MCF 10A (cell line): ENCODE measurements at regions of chr2 and their contacts with region 1.

Region 1: DNA sequence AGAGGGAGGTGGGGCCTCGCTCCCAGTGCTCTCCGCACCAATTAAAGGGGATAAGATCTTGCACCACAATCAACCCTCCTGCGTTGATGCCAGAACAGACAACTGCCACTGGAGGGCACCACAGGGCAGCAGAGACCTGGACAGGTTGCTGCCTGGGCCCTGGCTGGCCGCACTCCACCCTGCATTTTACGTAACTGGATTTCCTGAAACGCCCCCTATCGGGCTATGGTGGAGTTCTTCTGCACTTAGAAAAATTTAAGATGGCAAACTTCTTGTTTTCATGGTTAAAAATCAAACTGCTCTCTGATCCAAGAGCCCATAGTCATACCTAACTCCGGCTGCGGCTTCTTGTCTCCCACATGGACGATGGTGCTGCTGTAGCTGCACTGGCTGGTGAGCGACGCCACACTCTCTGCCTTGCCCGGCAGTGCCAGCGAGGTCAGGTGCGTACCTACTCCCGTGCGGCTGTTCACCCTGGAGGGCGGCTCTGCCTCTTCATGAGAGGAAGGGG is 16.8 kb upstream of the HES6 start:
- DNase-seq: peak; percentile 92
- H3K4me3 Mint-ChIP-seq: no peak overlapping the region
- H3K27ac Mint-ChIP-seq: no peak overlapping the region
- H3K4me1 Mint-ChIP-seq: no peaks in the 10 kb centered on the region
- H3K27me3 Mint-ChIP-seq: no peaks in the 10 kb centered on the region
- CTCF ChIP-seq: peak; percentile 97

Region 2: DNA sequence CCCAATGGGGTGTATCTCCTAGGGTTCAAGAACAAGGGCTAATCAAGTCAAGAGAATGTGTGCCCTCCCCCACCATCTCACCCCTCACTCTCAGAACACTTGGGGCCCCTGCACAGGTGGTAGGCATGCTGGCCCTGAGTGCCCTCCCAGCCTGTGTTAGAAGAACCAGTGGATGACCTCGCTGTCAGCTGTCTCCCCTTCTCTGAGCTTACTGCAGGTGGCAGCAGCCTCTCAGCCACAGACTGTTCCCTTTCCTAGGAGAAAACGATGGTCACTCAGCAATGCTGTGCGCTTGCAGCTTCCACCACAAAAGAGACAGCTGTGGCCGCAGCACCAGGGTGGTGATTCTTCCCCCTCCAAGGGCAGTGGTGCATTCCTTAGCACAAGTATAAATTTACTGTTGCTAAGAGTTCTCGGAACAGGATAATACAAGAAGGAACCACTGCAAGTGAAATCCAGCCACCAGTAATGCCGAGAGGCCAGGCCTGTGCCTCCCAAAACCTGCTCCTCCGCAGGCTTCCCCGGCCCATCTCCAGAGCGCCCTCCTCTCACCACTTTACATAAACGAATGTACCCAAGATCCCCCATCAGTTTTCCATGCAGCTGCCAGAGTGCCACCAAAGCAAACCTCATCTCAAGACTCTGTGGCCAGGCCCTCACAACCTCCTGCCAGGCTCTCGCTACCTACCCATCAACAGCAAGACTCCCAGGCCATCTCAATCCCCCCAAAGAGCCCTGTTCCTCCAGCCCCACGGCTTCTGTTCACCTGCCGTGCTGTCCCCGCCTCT is 398.2 kb before region 1 on chr2:
- CTCF ChIA-PET with region 1: no interaction called
- POLR2A ChIA-PET with region 1: no interaction called
- intact Hi-C with region 1: loop called (anchors 1 kb)
- DNase-seq: peak; percentile 84
- H3K4me3 Mint-ChIP-seq: peak overlapping the region; percentile 43
- H3K27ac Mint-ChIP-seq: no peak overlapping the region
- H3K4me1 Mint-ChIP-seq: peaks cover 8% of the 10 kb centered on the region
- H3K27me3 Mint-ChIP-seq: no peaks in the 10 kb centered on the region
- CTCF ChIP-seq: peak; percentile 81

Region 3: DNA sequence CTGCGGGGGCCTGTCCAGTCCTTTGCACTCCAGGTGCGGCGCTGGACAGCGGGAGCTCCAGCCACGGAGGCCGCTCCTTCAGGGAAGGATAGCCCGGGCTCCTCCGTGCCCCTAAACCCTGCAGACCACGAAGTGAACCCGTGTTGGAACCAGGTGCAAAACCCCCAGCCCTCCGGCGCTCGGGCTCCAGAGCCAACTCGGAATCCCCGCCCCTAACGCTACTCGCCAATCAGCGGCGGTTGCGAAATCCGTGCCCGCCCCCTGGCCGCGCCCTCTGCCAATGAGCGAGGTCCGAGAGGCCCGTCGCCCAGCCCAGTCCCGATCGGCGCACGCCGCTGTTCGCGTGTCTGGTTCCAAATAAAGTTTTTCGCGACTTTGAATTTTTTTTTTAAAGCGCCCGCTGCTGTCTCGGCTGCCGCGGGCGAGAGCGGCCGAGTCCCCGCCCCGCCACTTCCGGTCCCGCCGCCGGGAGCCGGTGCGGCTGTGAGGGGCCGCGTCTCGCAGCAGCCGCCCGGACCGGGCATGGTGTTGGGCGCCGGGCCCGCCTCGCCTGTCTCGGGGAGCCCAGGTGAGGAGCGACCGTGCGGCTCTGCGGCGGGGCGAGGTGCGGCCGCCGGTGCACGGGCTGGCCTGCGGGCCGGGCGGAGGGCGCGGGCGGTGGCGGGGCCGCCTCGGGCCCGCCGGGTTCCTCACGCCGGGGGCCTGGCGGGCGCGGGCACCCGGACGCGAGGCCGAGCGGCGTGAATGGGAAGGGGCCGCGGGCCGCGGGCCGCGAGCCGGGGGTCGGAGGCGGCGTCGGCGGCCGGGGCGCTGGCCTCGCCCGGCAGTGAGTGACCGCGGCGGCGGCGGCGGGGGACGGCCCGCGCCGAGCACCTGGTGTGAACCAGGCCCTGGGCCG is 289.8 kb before region 1 on chr2 and contains the start of gene UBE2F:
- CTCF ChIA-PET with region 1: no interaction called
- POLR2A ChIA-PET with region 1: interaction called, 3 read pairs
- intact Hi-C with region 1: loop called (anchors 2 kb)
- DNase-seq: peak; percentile 96
- H3K4me3 Mint-ChIP-seq: peak within 1 kb of the TSS; percentile 83
- H3K27ac Mint-ChIP-seq: peak within 1 kb of the TSS; percentile 74
- H3K4me1 Mint-ChIP-seq: peaks cover 32% of the 10 kb centered on the region
- H3K27me3 Mint-ChIP-seq: no peaks in the 10 kb centered on the region
- CTCF ChIP-seq: no peak
- total RNA-seq, gene UBE2F: 116 and 125 TPM in 2 replicates

Region 4: GRCh38 chr2:238305092-238305862 is 48.6 kb after region 1 on chr2:
- CTCF ChIA-PET with region 1: interaction called, 18 read pairs
- POLR2A ChIA-PET with region 1: no interaction called
- intact Hi-C with region 1: loop called (anchors 1 kb)
- DNase-seq: peak; percentile 48
- H3K4me3 Mint-ChIP-seq: no peak overlapping the region
- H3K27ac Mint-ChIP-seq: peak overlapping the region; percentile 5
- H3K4me1 Mint-ChIP-seq: no peaks in the 10 kb centered on the region
- H3K27me3 Mint-ChIP-seq: no peaks in the 10 kb centered on the region
- CTCF ChIP-seq: peak; percentile 42

Region 5: GRCh38 chr2:238320246-238320647 is 63.6 kb after region 1 on chr2 and contains the start of gene TRAF3IP1:
- CTCF ChIA-PET with region 1: no interaction called
- POLR2A ChIA-PET with region 1: no interaction called
- intact Hi-C with region 1: loop called (anchors 1 kb)
- DNase-seq: peak; percentile 93
- H3K4me3 Mint-ChIP-seq: peak within 1 kb of the TSS; percentile 76
- H3K27ac Mint-ChIP-seq: peak within 1 kb of the TSS; percentile 66
- H3K4me1 Mint-ChIP-seq: peaks cover 7% of the 10 kb centered on the region
- H3K27me3 Mint-ChIP-seq: no peaks in the 10 kb centered on the region
- CTCF ChIP-seq: no peak
- total RNA-seq, gene TRAF3IP1: 19.1 and 30.1 TPM in 2 replicates

Region 6: DNA sequence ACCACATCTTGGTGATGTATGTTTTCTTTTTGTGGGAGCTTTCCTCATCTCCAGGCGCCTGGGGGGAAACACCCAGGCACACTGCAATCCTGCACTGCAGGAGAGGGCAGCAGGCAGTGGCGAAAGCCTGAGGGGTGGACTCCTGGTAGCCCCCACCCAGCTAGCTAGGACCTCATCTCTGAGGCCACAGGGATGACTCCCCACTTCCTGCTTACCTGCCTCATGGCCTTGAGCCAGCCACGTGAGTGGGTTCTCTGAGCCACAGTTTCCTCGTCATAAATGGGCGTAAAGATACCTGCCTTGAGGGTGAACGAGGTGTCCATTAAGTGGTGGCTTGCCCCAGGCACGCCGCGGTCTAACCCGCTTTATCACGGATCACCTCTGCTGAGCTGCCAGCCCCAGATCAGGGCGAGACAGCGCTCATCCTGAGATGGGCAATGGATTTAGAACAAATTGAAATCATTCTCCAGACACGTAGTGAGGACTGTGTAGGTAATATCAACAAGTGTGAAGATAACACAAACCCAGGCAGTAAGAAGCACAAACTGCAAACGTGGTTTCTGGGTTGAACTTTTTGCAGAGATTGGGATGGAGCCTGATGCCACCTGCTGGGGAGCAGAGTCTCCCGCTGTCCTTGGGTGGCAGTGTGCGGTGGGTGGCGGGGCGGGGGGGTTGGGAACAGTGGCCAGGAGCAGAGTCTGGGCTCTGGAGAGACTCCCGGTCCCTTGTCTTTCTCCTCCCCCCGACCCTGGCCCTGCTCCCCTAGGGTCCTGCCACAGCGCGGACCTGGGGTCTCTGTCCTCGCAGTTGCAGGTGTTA is 83.0 kb after region 1 on chr2:
- CTCF ChIA-PET with region 1: interaction called, 5 read pairs
- POLR2A ChIA-PET with region 1: no interaction called
- intact Hi-C with region 1: loop called (anchors 5 kb)
- DNase-seq: peak; percentile 34
- H3K4me3 Mint-ChIP-seq: no peak overlapping the region
- H3K27ac Mint-ChIP-seq: no peak overlapping the region
- H3K4me1 Mint-ChIP-seq: peaks cover 16% of the 10 kb centered on the region
- H3K27me3 Mint-ChIP-seq: no peaks in the 10 kb centered on the region
- CTCF ChIP-seq: peak; percentile 30

Region 7: DNA sequence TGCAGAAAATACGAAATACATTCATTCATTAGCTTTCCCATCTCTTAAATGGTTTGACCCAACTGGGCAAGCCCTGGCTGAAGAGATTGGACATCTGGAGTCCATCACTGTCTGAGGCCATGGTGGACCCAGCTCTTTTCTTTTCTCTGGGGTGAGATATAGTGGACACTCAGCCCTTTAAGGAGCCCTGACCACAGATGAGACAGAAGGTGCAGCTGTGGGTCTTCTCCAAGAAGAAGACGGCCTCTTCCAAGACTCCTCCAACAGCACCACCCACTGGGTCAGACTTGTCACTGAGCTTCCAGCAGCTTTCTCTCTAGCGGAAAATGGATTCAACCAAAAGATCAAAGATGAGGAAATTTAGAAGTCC is 618.4 kb after region 1 on chr2:
- CTCF ChIA-PET with region 1: no interaction called
- POLR2A ChIA-PET with region 1: no interaction called
- intact Hi-C with region 1: no loop called
- DNase-seq: no peak
- H3K4me3 Mint-ChIP-seq: no peak overlapping the region
- H3K27ac Mint-ChIP-seq: no peak overlapping the region
- H3K4me1 Mint-ChIP-seq: no peaks in the 10 kb centered on the region
- H3K27me3 Mint-ChIP-seq: no peaks in the 10 kb centered on the region
- CTCF ChIP-seq: peak; percentile 29